Naive thymus-derived CD4-positive, alpha-beta T cell (primary cell): ENCODE measurements at regions of chr1 and their contacts with region 1.

Region 1: GRCh38 chr1:234478481-234479309 is at the start of gene TARBP1:
- DNase-seq: peak; percentile 68 to 87 (median 83)
- ATAC-seq: peak; percentile 82
- H3K4me3 ChIP-seq: peak within 1 kb of the TSS; percentile 79
- H3K4me3 Mint-ChIP-seq: peak within 1 kb of the TSS; percentile 82 to 90 (median 90)
- H3K27ac ChIP-seq: peak within 1 kb of the TSS; percentile 75
- H3K27ac Mint-ChIP-seq: peak within 1 kb of the TSS; percentile 73 to 95 (median 85)
- H3K4me1 ChIP-seq: peaks cover 0 to 16% of the 10 kb centered on the region in 2 donors
- H3K4me1 Mint-ChIP-seq: peaks cover 14 to 44% (median 39%) of the 10 kb centered on the region in 7 donors
- H3K27me3 ChIP-seq: no peaks in the 10 kb centered on the region
- H3K27me3 Mint-ChIP-seq: peaks cover 0 to 19% (median 3%) of the 10 kb centered on the region in 5 donors
- total RNA-seq, gene TARBP1: 45.8 to 49.6 (median 47.5) TPM

Region 2: DNA sequence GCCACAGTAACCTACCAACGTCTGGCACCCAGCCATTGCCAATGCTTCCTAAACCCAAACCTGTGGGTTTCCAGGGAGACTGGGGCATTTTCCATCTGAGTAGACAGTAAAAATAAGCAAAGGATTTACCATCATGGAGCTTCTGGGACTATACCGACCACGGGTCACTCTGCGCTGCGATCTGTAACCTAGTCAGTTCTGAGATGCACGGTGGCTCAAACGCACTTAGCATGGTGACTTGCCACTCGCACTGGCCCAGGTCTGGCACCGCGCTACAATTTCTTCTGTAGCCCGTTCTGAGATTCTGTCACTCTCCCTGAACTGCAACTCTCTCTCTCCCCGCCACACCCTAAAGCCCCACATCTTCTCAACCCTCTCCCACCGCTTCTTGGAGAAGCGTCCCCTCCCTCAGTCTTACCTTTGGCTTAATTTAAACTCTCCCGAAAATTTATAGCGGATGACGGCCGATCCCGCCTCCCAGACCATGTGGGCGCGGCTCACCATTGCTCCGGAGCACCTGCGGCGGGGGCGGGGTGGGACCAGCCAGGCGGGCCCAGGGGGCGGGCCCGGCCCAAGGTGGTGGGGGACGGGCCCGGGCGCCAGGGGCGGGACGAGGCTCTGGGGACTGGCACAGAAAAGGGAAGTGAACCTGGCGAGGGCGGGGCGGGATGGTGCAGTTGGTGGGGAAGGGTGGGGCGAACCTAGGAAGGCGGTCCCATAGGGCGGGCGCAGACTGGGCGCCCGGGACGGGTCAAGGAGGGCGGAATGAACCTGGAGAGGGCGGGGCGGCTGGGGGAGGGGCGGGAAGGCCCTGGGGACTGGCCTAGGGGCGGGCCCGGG is 1151.7 kb before region 1 on chr1:
- CTCF ChIA-PET with region 1: no interaction called
- POLR2A ChIA-PET with region 1: no interaction called
- intact Hi-C with region 1: loop called in 1 of 2 experiments (anchors 5 kb)
- DNase-seq: peak; percentile 61 to 79 (median 74)
- ATAC-seq: peak; percentile 93
- H3K4me3 ChIP-seq: peak overlapping the region; percentile 43
- H3K4me3 Mint-ChIP-seq: peak overlapping the region; percentile 67 to 89 (median 83)
- H3K27ac ChIP-seq: no peak overlapping the region
- H3K27ac Mint-ChIP-seq: peak overlapping the region in 4 of 9 donors; percentile 8 to 83 (median 38)
- H3K4me1 ChIP-seq: peaks cover 6 to 8% of the 10 kb centered on the region in 2 donors
- H3K4me1 Mint-ChIP-seq: peaks cover 4 to 19% (median 8%) of the 10 kb centered on the region in 7 donors
- H3K27me3 ChIP-seq: no peaks in the 10 kb centered on the region
- H3K27me3 Mint-ChIP-seq: peaks cover 4 to 52% (median 13%) of the 10 kb centered on the region in 5 donors

Region 3: DNA sequence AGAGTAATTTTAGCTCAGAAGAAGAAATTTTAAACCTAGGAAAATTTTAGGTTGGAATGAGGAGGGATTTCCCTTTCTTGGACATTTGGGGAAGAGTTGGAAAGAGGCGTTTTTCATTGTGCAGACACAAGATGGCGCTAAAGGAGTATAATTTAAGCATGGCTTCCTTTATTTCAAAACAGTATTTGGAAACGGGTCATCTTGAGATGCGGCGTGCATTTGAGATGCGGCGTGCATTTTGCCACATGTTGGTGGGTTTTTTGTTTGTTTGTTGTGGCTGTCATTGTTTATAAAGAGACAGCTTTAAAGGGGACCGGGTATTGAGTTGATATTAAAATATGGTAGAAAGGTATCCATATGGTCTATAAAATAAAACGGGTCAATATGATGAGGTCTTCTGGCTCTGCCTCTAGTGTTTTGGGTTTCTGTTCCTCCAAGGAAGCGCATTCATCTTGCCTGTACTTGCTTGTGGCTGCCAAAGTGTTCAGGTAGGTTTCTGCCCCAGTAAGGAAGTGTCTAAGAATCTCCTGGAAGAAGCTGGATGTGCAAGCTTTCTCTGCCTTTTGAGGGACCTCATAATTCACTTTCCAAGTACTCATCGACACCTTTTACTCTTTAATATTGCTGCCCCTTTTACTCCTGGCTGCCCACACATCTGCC is 363.9 kb before region 1 on chr1:
- CTCF ChIA-PET with region 1: no interaction called
- POLR2A ChIA-PET with region 1: no interaction called
- intact Hi-C with region 1: loop called in 1 of 2 experiments (anchors 10 kb)
- DNase-seq: peak in 6 of 9 donors; percentile 10 to 43 (median 26)
- ATAC-seq: peak; percentile 44
- H3K4me3 ChIP-seq: peak overlapping the region; percentile 18
- H3K4me3 Mint-ChIP-seq: peak overlapping the region in 8 of 10 donors; percentile 47 to 84 (median 61)
- H3K27ac ChIP-seq: no peak overlapping the region
- H3K27ac Mint-ChIP-seq: peak overlapping the region in 2 of 9 donors; percentile 19 to 46
- H3K4me1 ChIP-seq: no peaks in the 10 kb centered on the region
- H3K4me1 Mint-ChIP-seq: peaks cover 3 to 9% (median 8%) of the 10 kb centered on the region in 7 donors
- H3K27me3 ChIP-seq: no peaks in the 10 kb centered on the region
- H3K27me3 Mint-ChIP-seq: peaks cover 0 to 36% (median 24%) of the 10 kb centered on the region in 5 donors

Region 4: GRCh38 chr1:234326497-234327366 is 152.0 kb before region 1 on chr1:
- CTCF ChIA-PET with region 1: no interaction called
- POLR2A ChIA-PET with region 1: no interaction called
- intact Hi-C with region 1: loop called (anchors 1 to 5 kb)
- DNase-seq: peak; percentile 32 to 79 (median 67)
- ATAC-seq: peak; percentile 92
- H3K4me3 ChIP-seq: peak overlapping the region; percentile 64
- H3K4me3 Mint-ChIP-seq: peak overlapping the region; percentile 76 to 94 (median 90)
- H3K27ac ChIP-seq: peak overlapping the region; percentile 67
- H3K27ac Mint-ChIP-seq: peak overlapping the region; percentile 41 to 99 (median 85)
- H3K4me1 ChIP-seq: peaks cover 0 to 4% of the 10 kb centered on the region in 2 donors
- H3K4me1 Mint-ChIP-seq: peaks cover 23 to 36% (median 30%) of the 10 kb centered on the region in 7 donors
- H3K27me3 ChIP-seq: no peaks in the 10 kb centered on the region
- H3K27me3 Mint-ChIP-seq: peaks cover 4 to 23% (median 12%) of the 10 kb centered on the region in 5 donors